GM13976 (cell line): ENCODE measurements at regions of chrX and their contacts with region 1.

Region 1: GRCh38 chrX:57848857-57849256 is 61.4 kb downstream of the ZXDA start:
- DNase-seq: no peak
- CTCF ChIP-seq: no peak

Region 2: DNA sequence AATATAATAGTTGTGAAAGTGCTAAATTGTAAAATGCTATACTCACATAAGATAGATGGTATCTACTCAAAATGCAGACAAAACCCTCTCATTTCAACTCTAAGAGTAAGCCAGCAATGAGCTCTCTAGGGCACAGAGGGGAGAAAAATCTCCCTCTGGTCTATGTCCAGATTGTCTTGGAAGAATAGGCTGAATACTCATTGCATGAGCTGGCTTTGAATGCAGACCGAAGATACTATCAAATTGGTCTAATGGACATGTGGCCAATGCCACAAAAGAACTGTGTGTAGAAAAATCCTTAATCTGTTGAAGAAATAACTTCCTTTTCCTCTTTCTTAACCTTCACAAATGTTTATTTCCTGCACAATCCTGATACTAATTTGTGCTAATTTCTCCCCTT is 57.9 kb after region 1 on chrX:
- in situ Hi-C with region 1: no loop called
- DNase-seq: no peak
- CTCF ChIP-seq: no peak

Region 3: DNA sequence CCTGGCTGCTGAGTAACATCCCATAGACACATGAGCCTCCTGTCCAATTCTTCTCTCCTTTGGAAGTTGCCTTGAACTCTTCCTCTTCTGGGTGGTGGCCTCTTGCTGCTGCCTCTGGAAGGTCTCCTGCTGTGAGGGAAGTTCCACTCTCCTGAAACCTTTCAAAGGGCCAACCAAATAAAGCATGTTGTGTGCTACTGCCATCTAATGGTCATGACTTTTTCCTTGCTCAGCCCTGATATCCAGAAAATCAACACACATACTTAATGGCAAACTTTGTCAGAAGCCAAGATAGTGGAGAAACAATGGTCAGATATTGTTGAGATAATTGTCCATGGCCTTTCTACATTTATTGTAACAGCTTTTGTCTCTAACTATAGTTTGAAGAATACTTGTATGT is 80.5 kb after region 1 on chrX:
- in situ Hi-C with region 1: loop called (anchors 25 kb)
- DNase-seq: no peak
- CTCF ChIP-seq: peak; percentile 59